ENCODE measurements at regions of chr6 and their contacts with region 1.

Region 1: DNA sequence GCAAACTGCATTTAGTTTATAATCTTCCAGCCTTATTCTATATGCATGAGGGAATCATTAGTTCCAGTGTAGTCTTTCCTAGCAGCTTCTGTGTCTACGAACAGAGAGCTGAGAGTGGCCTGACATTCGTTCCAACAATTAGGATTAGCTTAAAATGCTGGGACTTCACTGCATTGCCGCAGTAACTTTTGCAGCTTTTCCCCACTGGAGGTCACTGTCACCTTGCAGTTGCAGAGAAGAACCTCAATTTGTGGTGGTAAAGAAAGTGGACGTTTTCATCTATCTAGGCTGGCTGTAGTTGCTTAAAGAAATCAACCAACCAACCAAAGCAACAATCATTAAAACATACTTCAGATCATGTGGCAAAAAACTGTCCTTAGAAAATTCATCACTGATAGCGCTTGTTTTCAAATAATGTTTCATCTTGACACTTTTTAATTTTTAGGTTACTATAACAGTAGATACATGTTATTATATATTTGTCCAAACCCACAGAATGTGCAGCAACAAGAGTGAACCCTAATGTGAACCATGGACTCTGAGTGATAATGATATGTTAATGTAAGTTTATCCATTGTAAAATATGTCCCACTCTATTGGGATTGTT is 12.2 kb downstream of the MYLK4 start:
- DNase-seq: peak; percentile 80
- ATAC-seq: peak; percentile 84
- H3K4me3 ChIP-seq: no peak overlapping the region
- H3K27ac ChIP-seq: no peak overlapping the region
- H3K4me1 ChIP-seq: peaks cover 5% of the 10 kb centered on the region; the same call in 1 of the 2 replicates
- H3K27me3 ChIP-seq: no peaks in the 10 kb centered on the region
- CTCF ChIP-seq: peak; percentile 95

Region 2: DNA sequence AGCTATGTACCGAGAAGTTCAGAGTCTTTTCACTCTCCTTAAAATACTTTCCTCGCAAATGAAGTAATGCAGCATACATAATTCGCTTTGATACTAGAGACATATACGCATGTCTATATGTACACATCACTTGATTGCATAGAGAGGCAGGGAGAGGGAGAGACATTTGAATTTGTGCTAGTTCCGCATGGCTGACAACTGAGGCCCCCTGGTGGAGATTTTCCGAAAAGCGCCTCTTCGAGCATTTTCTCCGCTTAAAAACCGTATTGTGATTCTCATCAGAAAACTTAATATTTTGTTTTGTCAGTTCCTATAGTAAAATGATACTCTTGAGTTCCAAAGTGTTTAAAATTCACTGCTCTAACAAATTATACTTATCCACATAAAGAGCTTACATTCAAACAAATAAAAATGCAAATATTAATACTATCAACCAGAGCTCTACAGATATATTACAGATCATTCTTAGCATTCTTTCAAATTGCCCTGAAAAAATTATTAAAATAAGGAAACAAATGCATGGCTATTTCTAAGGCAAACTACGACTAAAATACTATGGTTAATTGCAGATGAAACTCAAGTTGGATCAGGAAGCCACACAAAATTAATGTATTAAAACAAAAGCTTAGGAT is 11.6 kb after region 1 on chr6:
- CTCF ChIA-PET with region 1: interaction called, 12 read pairs
- POLR2A ChIA-PET with region 1: no interaction called
- intact Hi-C with region 1: no loop called
- DNase-seq: peak; percentile 83
- ATAC-seq: peak; percentile 76
- H3K4me3 ChIP-seq: peak overlapping the region; percentile 11; the same call in 1 of the 2 replicates
- H3K27ac ChIP-seq: no peak overlapping the region
- H3K4me1 ChIP-seq: peaks cover 16% of the 10 kb centered on the region
- H3K27me3 ChIP-seq: no peaks in the 10 kb centered on the region
- CTCF ChIP-seq: peak; percentile 91